A549 (cell line): ENCODE measurements at regions of chr20 and their contacts with region 1.

Region 1: DNA sequence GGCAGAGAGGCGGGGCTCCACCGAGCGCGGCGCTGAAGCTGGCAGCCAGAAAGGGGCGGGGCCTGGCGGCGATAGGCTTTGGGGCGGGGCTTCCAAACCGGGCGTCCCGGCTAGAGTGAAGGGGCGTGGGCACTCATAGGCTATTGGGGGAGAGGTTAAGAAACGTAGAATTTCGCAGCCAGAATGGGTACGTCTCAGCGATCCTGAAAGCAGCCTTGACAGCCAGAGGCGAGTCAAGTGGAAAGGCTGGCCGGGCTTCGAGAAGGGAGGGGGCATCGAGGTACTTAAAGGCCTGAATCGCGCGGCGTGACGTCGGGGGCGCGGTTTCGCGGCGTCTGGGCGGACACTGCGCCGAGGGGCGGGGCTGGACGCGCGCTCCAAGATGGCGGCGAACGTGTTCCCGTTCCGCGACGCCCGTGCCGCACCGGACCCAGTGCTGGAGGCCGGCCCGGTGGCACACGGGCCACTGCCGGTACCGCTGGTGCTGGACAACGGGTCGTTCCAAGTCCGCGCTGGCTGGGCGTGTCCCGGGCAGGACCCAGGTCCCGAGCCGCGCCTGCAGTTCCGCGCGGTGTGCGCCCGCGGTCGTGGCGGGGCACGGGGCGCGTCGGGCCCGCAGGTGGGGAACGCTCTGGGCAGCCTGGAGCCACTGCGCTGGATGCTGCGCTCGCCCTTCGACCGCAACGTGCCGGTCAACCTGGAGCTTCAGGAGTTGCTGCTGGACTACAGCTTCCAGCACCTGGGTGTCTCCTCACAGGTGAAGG is at the start of gene ACTR5:
- DNase-seq: peak; percentile 81 to 90
- ATAC-seq: peak; percentile 94 to 95
- H3K4me3 ChIP-seq: peak within 1 kb of the TSS; percentile 99
- H3K27ac ChIP-seq: peak within 1 kb of the TSS; percentile 96
- H3K4me1 ChIP-seq: peaks cover 11% of the 10 kb centered on the region; the same call in 2 of the 3 replicates
- CTCF ChIP-seq: no peak
- EP300 ChIP-seq: no peak
- POLR2A ChIP-seq: peak; percentile 98
- RAD21 ChIP-seq: no peak
- polyA plus RNA-seq, gene ACTR5: 11.9 and 13.4 TPM in 2 replicates

Region 2: DNA sequence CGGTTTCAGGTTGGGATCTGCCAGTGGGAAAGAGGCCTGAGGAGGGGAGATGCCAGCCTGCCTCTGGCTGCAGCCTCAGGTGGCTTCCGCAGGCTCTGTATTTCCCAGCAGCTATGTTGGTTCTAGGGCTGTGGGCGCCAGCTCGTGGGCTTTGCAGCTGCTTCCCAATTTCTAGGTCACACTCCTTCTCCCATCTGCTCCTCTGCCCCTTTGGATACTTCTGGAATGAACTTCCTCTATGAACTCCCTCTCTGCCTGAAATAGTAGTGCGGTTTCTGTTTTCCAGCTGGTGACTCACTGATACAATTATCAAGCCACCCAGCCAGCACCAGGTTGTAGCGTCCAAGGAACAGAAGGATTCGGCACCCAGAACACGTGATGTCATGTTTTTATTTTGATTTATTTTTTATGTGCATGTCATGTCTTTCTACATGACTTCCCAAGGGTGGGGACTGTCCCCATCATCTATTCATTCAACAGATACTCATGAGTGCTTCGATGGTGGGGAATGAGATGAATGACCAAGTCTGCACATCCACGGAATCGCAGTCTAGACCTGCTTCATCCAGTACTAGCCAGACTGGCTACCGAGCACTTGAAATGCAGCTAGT is 621.2 kb before region 1 on chr20:
- CTCF ChIA-PET with region 1: no interaction called
- POLR2A ChIA-PET with region 1: no interaction called
- DNase-seq: peak; percentile 52 to 58
- ATAC-seq: peak; percentile 39 to 45; a peak in 4 of 6 replicates
- H3K4me3 ChIP-seq: no peak overlapping the region
- H3K27ac ChIP-seq: peak overlapping the region; percentile 61 to 82
- H3K4me1 ChIP-seq: peaks cover 55% of the 10 kb centered on the region
- CTCF ChIP-seq: no peak
- EP300 ChIP-seq: no peak
- POLR2A ChIP-seq: no peak
- RAD21 ChIP-seq: no peak

Region 3: DNA sequence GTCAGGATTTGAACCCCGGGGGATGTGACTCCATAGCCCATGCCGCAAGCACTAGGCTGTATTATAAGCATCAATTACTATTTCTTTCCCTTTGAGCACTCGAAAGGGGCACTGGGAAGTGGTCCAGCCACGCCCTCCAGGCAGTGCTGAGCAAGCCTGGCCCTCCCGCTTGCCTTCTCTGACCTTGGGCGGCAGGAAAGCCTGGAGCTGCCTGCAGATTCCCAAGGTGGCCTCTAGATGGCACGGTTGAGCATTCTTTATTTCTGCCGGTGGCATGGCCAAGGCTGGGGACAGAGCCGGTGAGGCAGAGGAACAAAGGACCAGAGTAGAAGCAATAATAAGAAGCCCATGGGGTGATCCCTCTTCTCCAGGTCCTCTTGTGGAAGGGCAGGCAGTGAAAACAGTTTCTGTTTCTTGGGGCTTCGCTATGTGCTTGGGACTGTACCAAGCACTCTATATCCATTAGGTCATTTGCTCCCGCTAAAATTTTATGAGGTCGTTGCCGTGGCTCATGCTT is 114.6 kb before region 1 on chr20:
- CTCF ChIA-PET with region 1: interaction called, 253 read pairs
- POLR2A ChIA-PET with region 1: no interaction called
- DNase-seq: peak; percentile 54 to 82
- ATAC-seq: peak; percentile 90 to 94
- H3K4me3 ChIP-seq: no peak overlapping the region
- H3K27ac ChIP-seq: no peak overlapping the region
- H3K4me1 ChIP-seq: peaks cover 14% of the 10 kb centered on the region; the same call in 1 of the 3 replicates
- CTCF ChIP-seq: peak; percentile 71
- EP300 ChIP-seq: no peak
- POLR2A ChIP-seq: no peak
- RAD21 ChIP-seq: peak; percentile 52 to 55; a peak in 4 of 5 replicates

Region 4: GRCh38 chr20:38658879-38659596 is 89.2 kb before region 1 on chr20:
- CTCF ChIA-PET with region 1: interaction called, 29 read pairs
- POLR2A ChIA-PET with region 1: no interaction called
- DNase-seq: peak; percentile 38 to 79
- ATAC-seq: peak; percentile 93 to 98
- H3K4me3 ChIP-seq: no peak overlapping the region
- H3K27ac ChIP-seq: no peak overlapping the region
- H3K4me1 ChIP-seq: no peaks in the 10 kb centered on the region
- CTCF ChIP-seq: peak; percentile 44
- EP300 ChIP-seq: no peak
- POLR2A ChIP-seq: no peak
- RAD21 ChIP-seq: peak in 1 of 2 experiments; percentile 45; a peak in 3 of 5 replicates

Region 5: DNA sequence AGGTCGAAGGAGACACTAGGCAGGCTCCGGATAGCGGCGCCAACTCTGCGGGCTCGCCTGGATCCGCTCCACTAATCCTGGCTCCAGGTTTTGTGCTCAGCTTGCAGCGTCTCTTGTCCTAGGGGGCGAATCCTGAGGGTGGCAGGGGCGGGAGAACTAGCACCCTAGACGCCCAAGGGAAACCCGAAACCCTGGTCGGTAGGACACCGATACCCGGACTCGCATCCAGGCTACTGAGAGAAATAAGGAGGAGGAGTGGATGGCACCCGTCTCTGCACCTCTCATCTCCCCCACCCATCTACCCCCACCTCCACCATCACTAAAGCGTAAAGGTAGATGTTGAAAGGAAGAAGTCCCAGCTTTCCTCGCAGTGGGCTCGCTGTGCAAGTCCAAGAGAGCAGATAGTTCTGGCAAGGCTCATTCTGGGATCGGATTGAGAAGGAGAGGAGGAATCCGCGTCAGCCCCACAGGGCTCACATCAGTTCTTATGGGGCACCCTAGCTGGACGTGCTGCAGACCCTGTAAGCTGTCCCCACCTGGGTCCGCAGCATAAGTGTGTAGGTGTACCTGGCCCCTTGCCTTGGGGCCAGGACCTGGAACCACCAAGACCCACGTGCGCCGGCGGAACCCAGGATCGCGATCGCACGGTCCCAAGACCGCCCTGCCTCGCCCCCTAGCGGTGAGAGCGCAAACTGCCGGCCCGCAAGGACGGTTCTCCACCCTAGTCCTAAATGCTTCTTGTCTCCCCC is 17.1 kb before region 1 on chr20:
- CTCF ChIA-PET with region 1: interaction called, 55 read pairs
- POLR2A ChIA-PET with region 1: no interaction called
- DNase-seq: peak; percentile 79 to 93
- ATAC-seq: peak; percentile 79 to 92
- H3K4me3 ChIP-seq: peak overlapping the region; percentile 57
- H3K27ac ChIP-seq: peak overlapping the region; percentile 59; a peak in 5 of 6 replicates
- H3K4me1 ChIP-seq: peaks cover 5% of the 10 kb centered on the region; the same call in 1 of the 3 replicates
- CTCF ChIP-seq: peak; percentile 84
- EP300 ChIP-seq: no peak
- POLR2A ChIP-seq: 0 out of 2 replicates have a peak, but pooled peaks have one; percentile 5
- RAD21 ChIP-seq: peak; percentile 56 to 60

Region 6: GRCh38 chr20:38764567-38765355 is 16.5 kb after region 1 on chr20:
- CTCF ChIA-PET with region 1: interaction called, 102 read pairs
- POLR2A ChIA-PET with region 1: no interaction called
- DNase-seq: peak; percentile 86
- ATAC-seq: peak; percentile 99
- H3K4me3 ChIP-seq: 0 out of 3 replicates have a peak overlapping the region, but pooled peaks have one; percentile 11
- H3K27ac ChIP-seq: peak overlapping the region; percentile 79 to 84
- H3K4me1 ChIP-seq: peaks cover 29% of the 10 kb centered on the region
- CTCF ChIP-seq: no peak
- EP300 ChIP-seq: no peak
- POLR2A ChIP-seq: no peak
- RAD21 ChIP-seq: no peak; a peak in 1 of 5 replicates

Region 7: DNA sequence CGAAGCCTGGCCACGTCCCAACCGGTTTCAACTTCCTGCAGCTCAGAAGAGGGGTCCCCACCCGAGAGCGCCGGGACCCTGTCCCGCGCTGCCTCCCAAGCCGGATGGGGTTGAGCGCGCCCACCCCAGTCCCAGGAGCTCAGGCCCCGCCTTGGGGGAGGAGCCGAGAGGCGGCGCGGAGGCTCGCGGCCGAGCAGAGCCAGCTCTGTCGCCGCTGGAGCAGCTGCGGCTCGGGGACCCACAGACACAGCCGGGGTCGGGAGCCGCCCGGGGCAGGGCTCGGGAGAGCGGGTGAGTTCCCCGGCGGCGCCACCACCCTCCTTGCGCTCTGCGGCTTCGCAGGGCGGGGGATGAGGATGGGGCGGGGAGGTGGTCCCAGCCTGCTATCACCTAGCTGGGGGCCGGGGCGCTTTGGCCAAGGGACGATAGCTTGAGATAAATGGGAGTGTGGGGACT is 57.3 kb after region 1 on chr20 and contains the start of gene PPP1R16B:
- CTCF ChIA-PET with region 1: no interaction called
- POLR2A ChIA-PET with region 1: interaction called, 11 read pairs
- DNase-seq: peak in 1 of 2 experiments; percentile 26
- ATAC-seq: peak; percentile 84 to 91
- H3K4me3 ChIP-seq: peak within 1 kb of the TSS; percentile 61
- H3K27ac ChIP-seq: peak within 1 kb of the TSS; percentile 49 to 70; a peak in 5 of 6 replicates
- H3K4me1 ChIP-seq: no peaks in the 10 kb centered on the region
- CTCF ChIP-seq: no peak
- EP300 ChIP-seq: no peak
- POLR2A ChIP-seq: no peak; the same call in 1 of the 2 replicates
- RAD21 ChIP-seq: no peak
- polyA plus RNA-seq, gene PPP1R16B: 0.17 and 0.28 TPM in 2 replicates